ENCODE measurements at regions of chr16 and their contacts with region 1.

Region 1: DNA sequence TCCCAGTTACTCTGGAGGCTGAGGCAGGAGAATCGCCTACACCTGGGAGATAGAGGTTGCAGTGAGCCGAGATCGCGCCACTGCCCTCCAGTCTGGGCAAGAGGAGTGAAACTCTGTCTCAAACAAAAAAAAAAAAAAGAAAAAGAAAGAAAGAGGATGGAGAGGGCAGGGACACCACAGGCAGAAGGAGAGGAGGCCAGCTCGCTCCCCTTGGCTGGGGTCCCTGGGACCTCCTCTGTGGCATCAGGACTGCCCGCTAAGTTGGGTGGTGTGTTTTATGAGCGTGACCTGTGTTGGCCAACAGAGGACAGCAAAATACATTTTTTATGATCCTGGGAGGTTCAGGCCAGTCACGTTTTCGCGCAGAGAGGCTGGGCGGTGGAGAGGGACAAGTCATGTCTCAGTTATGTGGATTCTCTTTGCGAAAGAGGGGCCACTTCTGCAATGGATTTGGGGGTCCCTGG is 229.6 kb downstream of the MRTFB start:
- DNase-seq: peak; percentile 73
- H3K4me3 Mint-ChIP-seq: peak overlapping the region; percentile 66
- H3K27ac Mint-ChIP-seq: no peak overlapping the region
- H3K4me1 Mint-ChIP-seq: peaks cover 12% of the 10 kb centered on the region
- H3K27me3 Mint-ChIP-seq: no peaks in the 10 kb centered on the region

Region 2: DNA sequence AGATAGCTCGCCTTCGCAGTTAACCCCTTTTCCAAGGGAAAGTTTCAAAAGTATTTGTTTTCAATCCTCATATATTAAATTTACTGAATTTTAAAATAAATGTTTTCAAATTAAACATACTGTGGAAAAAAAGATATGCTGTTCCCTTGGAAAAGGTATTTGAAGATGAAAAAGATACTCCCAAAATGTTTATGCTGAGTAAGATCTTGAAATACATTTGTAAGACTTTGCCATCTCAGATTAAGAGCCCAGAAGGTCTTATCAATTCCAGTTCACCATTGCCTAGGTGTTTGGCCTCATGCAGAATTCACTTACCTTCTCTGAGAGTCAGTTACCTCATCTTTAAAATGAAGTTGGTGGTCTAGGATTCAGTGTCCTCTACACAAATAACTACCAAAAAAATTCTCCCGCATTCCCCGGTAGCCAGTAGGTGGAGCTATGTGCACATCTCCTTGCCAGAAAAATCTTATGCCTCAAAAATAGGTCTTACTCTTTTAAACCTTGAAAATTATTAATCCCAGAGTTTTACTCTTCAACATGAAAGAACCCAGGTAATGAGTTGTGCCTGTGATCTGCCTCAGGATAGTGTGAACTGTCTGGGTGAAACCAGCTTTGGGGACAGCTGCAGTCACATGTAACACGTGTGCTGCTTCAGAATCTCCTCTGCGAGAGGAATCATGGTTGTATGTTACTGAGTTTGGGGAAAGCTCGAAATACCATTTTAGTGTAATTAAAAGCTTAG is 51.3 kb before region 1 on chr16:
- CTCF ChIA-PET with region 1: no interaction called
- intact Hi-C with region 1: loop called (anchors 5 kb)
- DNase-seq: peak; percentile 74
- H3K4me3 Mint-ChIP-seq: no peak overlapping the region
- H3K27ac Mint-ChIP-seq: no peak overlapping the region
- H3K4me1 Mint-ChIP-seq: peaks cover 3% of the 10 kb centered on the region
- H3K27me3 Mint-ChIP-seq: no peaks in the 10 kb centered on the region

Region 3: GRCh38 chr16:14354551-14355351 is 54.0 kb after region 1 on chr16:
- CTCF ChIA-PET with region 1: no interaction called
- intact Hi-C with region 1: loop called (anchors 2 kb)
- DNase-seq: peak; percentile 81
- H3K4me3 Mint-ChIP-seq: peak overlapping the region; percentile 46
- H3K27ac Mint-ChIP-seq: no peak overlapping the region
- H3K4me1 Mint-ChIP-seq: peaks cover 10% of the 10 kb centered on the region
- H3K27me3 Mint-ChIP-seq: peaks cover 5% of the 10 kb centered on the region

Region 4: DNA sequence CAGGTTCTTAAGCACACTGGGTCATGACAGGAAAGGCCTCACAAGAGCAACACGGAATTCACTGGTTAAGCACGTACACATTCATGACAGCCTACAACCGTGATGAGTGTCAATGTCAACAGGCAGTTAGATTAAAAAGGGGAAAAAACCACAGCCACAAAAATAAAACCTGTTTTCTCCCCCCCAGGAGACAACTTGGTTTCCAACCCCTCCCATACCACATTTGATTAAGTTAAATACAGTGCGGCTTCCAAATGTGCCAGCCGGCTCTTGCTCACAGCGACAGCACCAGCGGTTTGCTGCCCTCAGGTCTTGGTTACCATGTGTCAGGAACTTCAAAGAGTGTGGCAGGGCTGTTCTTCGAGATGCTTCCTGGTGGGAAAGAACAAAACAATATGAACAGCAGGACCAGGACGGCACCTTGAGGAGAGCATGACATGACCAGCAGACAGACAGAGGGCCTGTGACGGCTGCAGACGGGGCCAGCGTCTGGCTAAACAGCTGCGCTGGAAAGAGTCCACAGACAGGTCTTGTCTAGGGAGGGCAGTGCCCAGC is 135.7 kb after region 1 on chr16:
- CTCF ChIA-PET with region 1: no interaction called
- intact Hi-C with region 1: loop called (anchors 10 kb)
- DNase-seq: peak; percentile 40
- H3K4me3 Mint-ChIP-seq: no peak overlapping the region
- H3K27ac Mint-ChIP-seq: no peak overlapping the region
- H3K4me1 Mint-ChIP-seq: peaks cover 33% of the 10 kb centered on the region
- H3K27me3 Mint-ChIP-seq: no peaks in the 10 kb centered on the region

Region 5: DNA sequence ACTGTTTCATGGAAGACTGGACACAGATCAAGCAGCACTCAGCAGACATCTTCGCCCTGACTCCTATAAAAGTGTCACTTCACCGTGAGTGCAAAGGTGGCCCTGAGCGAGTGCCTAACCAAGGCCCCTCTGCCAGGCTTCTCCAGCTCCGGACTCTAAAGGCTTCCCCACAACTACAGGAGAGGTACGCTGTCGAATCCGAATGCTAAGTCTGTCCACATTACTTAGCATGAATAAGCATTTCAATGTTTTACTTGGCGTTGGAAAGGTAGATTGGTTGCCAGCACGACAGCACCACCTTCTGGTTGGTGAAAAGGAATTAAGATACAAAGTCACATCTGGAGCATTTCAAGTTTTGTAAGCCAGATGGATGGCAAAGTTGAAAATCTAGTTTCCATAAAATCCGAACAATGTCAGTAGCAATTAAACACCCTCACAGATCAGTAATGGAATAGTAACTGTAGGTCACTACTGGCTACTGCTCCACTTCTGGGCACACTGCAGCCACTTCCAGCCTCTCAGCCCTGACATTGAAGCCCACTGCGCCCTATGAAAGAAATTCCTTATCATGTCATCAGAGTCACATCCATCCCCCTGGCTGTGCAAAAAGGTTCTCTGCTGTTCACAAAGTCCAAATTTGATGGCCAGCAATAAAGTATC is 228.4 kb after region 1 on chr16:
- CTCF ChIA-PET with region 1: interaction called, 6 read pairs
- intact Hi-C with region 1: loop called (anchors 1 kb)
- DNase-seq: peak; percentile 79
- H3K4me3 Mint-ChIP-seq: no peak overlapping the region
- H3K27ac Mint-ChIP-seq: peak overlapping the region; percentile 15
- H3K4me1 Mint-ChIP-seq: peaks cover 5% of the 10 kb centered on the region
- H3K27me3 Mint-ChIP-seq: no peaks in the 10 kb centered on the region

Measured in activated naive CD4-positive, alpha-beta T cell treated with anti-CD3 and anti-CD28 coated beads for 36 hours (primary cell).